Dorsolateral prefrontal cortex (tissue), 120 donors: ENCODE measurements at regions of chr6 and their contacts with region 1.

Region 1: GRCh38 chr6:161370880-161371279 is 97.0 kb upstream of the AGPAT4 start:
- DNase-seq: peak in 9 of 10 donors; percentile 53 to 82 (median 73)
- H3K4me3 ChIP-seq: no peak overlapping the region
- H3K27ac ChIP-seq: peak overlapping the region in 13 of 59 donors; percentile 4 to 65 (median 43)
- H3K27me3 ChIP-seq: no peaks in the 10 kb centered on the region
- CTCF ChIP-seq: peak; percentile 86 to 99 (median 95)

Region 2: GRCh38 chr6:160930547-160931377 is 440.1 kb before region 1 on chr6:
- intact Hi-C with region 1: loop called (anchors 2 to 5 kb)
- DNase-seq: peak; percentile 61 to 88 (median 80)
- H3K4me3 ChIP-seq: peak overlapping the region; percentile 47 to 78 (median 65)
- H3K27ac ChIP-seq: peak overlapping the region in 46 of 59 donors; percentile 8 to 85 (median 66)
- H3K27me3 ChIP-seq: no peaks in the 10 kb centered on the region
- CTCF ChIP-seq: peak; percentile 58 to 97 (median 91)

Region 3: GRCh38 chr6:161101517-161101916 is 269.4 kb before region 1 on chr6:
- intact Hi-C with region 1: loop called (anchors 2 kb)
- DNase-seq: peak in 2 of 10 donors; percentile 18 to 50
- H3K4me3 ChIP-seq: no peak overlapping the region
- H3K27ac ChIP-seq: peak overlapping the region in 9 of 59 donors; percentile 3 to 31 (median 11)
- H3K27me3 ChIP-seq: no peaks in the 10 kb centered on the region
- CTCF ChIP-seq: peak in 53 of 56 donors; percentile 10 to 71 (median 49)

Region 4: GRCh38 chr6:161242779-161243693 is 127.8 kb before region 1 on chr6:
- intact Hi-C with region 1: loop called in 1 of 2 experiments (anchors 10 kb)
- DNase-seq: peak in 9 of 10 donors; percentile 61 to 89 (median 80)
- H3K4me3 ChIP-seq: peak overlapping the region in 39 of 59 donors; percentile 1 to 55 (median 27)
- H3K27ac ChIP-seq: peak overlapping the region in 58 of 59 donors; percentile 11 to 93 (median 80)
- H3K27me3 ChIP-seq: no peaks in the 10 kb centered on the region
- CTCF ChIP-seq: peak in 9 of 56 donors; percentile 7 to 44 (median 15)

Region 5: DNA sequence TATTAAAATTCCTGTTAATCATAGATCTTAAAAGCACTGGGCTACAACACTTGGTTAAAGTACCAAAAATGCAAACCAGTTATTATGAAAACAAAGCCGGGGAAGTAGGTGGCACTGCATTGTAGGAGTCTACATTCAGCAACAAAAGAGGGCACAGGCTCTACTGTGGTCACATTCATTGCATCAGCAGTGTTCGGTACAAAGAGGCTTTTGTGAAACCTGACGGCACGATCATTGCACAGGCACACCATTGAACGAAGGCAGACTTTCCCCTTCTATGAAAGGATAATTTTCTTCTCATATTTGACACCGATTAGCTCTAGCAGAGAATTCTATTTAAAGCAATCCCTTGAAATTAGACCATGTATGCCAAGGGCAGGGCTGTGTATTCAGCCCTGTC is 52.4 kb before region 1 on chr6:
- intact Hi-C with region 1: loop called in 1 of 2 experiments (anchors 1 kb)
- DNase-seq: peak in 9 of 10 donors; percentile 35 to 87 (median 60)
- H3K4me3 ChIP-seq: peak overlapping the region in 39 of 59 donors; percentile 2 to 53 (median 26)
- H3K27ac ChIP-seq: peak overlapping the region; percentile 40 to 99 (median 94)
- H3K27me3 ChIP-seq: no peaks in the 10 kb centered on the region
- CTCF ChIP-seq: peak in 21 of 56 donors; percentile 4 to 51 (median 25)